ENCODE measurements at regions of chr1 and their contacts with region 1.

Region 1: DNA sequence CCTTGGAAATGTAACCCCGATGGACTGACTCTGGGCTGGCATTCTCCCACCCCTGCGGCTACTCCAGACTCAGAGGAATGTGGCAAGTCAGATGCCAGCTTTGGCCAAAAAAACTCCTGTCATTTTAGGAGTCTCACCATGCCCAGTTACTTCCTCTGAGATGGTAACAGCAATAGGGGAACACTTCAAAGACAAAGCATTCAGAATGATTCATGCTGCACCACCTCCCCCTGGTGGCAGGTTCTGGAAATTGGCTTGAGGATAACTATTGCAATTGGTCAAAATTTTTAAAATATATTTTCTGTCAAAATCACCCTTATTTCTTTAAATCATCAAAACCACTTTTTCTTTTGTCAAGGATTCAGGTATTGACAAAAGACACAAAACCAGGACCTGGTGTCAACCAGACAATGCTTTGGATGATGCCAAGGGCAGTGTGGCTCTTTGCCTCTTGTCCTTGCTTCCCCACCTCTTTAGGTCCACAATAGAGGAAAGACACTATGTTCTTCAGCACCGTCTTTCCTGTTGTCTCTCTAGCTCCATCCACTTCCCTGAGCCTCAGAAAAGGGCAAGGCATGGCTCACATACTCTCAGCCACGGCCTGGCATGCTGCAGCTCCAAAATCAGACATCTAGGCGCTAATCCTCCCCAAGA is 9.9 kb upstream of the CDCA8 start:
- DNase-seq: peak; percentile 93
- H3K4me3 Mint-ChIP-seq: no peak overlapping the region
- H3K27ac Mint-ChIP-seq: no peak overlapping the region
- H3K4me1 Mint-ChIP-seq: peaks cover 6% of the 10 kb centered on the region
- H3K27me3 Mint-ChIP-seq: no peaks in the 10 kb centered on the region

Region 2: GRCh38 chr1:37453647-37454046 is 228.8 kb before region 1 on chr1:
- intact Hi-C with region 1: loop called (anchors 1 kb)
- DNase-seq: no peak
- H3K4me3 Mint-ChIP-seq: no peak overlapping the region
- H3K27ac Mint-ChIP-seq: no peak overlapping the region
- H3K4me1 Mint-ChIP-seq: peaks cover 13% of the 10 kb centered on the region
- H3K27me3 Mint-ChIP-seq: no peaks in the 10 kb centered on the region

Region 3: DNA sequence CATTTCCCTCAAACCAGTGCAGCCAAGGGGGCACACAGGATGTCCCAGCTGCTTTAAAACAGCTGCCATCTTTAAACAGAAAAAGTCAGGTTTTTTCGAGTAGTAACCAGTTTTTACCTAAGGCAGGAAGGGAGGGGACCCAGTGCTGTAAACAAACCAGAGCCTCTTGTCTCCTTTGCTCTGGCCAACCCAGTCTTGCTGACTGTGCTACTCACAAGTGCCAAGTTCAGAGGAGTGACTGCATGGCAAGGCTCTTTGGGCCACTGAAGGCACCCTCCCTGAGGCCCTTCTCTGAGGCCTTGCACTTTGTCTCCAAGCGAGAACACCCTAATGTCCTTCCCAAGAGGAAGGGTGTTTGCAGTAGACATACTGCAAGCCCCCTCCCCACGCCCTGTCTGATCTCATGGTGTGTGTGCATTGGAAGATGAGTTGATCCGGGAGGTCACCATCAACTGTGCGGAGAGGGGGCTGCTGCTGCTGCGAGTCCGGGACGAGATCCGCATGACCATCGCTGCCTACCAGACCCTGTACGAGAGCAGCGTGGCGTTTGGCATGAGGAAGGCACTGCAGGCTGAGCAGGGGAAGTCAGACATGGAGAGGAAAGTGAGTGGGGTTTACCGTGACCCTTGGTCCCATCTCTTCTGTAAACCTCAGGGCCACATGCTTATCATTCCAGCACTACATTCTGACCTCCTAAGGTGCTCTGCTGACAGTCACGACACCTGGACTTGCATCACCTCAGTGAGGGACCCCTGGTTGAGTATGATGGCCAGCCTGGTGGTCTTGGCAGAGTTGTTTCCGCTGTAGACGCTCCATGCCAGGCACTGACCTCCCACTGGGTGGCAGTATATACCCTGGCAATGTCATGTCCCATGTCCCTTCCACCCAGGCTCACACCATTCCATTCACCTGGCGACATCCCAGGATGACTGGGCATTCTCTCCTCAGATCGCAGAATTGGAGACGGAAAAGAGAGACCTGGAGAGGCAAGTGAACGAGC is 121.0 kb before region 1 on chr1:
- intact Hi-C with region 1: loop called (anchors 2 kb)
- DNase-seq: peak; percentile 77
- H3K4me3 Mint-ChIP-seq: no peak overlapping the region
- H3K27ac Mint-ChIP-seq: no peak overlapping the region
- H3K4me1 Mint-ChIP-seq: peaks cover 10% of the 10 kb centered on the region
- H3K27me3 Mint-ChIP-seq: no peaks in the 10 kb centered on the region

Region 4: DNA sequence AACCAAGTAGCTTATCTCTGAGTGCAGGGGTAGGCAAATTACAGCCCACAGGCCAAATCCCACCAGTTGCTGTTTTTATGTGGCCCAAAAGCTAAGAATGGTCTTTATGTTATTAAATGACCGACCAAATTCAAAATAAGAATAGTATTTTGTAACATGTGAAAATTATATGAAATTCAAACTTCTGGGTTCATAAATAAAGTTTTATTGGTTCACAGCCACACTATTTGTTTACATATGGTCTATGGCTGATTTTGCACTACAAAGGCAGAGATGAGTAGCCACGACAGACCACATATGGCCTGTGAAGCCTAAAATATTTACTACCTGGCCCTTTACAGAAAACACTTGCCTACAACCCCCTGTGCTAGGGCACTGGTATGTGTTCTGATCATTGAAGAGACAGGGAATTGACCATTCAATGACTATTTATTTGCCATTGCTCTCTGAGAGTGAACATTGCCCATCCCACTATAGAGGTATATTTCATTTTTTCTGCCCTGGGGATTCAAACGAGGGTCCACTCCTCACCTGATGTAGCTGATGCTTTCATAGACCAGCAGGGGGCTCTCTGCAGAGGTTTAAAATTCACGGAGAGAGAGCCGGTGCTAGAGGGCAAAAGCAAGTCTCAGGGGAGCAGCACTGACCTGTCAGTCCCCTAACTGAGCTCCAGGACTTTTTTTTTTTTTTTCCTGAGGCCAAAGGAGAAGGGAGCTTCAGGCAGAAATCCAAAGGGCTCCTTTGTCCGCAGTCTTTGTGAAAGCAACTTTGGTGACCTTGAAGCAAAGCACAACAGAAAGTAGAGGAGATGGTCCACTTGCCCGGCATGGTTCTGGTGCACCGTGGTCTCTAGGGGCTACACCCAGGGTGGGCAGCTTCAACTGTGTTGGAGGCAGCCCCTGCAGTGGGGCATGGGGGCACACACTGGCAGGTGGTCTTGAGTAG is 79.4 kb before region 1 on chr1:
- intact Hi-C with region 1: loop called (anchors 1 kb)
- DNase-seq: peak; percentile 81
- H3K4me3 Mint-ChIP-seq: no peak overlapping the region
- H3K27ac Mint-ChIP-seq: no peak overlapping the region
- H3K4me1 Mint-ChIP-seq: peaks cover 3% of the 10 kb centered on the region
- H3K27me3 Mint-ChIP-seq: peaks cover 28% of the 10 kb centered on the region

Region 5: GRCh38 chr1:37718901-37719571 is 36.6 kb after region 1 on chr1:
- intact Hi-C with region 1: no loop called
- DNase-seq: no peak
- H3K4me3 Mint-ChIP-seq: no peak overlapping the region
- H3K27ac Mint-ChIP-seq: no peak overlapping the region
- H3K4me1 Mint-ChIP-seq: no peaks in the 10 kb centered on the region
- H3K27me3 Mint-ChIP-seq: no peaks in the 10 kb centered on the region